ENCODE measurements at regions of chr6 and their contacts with region 1.

Region 1: DNA sequence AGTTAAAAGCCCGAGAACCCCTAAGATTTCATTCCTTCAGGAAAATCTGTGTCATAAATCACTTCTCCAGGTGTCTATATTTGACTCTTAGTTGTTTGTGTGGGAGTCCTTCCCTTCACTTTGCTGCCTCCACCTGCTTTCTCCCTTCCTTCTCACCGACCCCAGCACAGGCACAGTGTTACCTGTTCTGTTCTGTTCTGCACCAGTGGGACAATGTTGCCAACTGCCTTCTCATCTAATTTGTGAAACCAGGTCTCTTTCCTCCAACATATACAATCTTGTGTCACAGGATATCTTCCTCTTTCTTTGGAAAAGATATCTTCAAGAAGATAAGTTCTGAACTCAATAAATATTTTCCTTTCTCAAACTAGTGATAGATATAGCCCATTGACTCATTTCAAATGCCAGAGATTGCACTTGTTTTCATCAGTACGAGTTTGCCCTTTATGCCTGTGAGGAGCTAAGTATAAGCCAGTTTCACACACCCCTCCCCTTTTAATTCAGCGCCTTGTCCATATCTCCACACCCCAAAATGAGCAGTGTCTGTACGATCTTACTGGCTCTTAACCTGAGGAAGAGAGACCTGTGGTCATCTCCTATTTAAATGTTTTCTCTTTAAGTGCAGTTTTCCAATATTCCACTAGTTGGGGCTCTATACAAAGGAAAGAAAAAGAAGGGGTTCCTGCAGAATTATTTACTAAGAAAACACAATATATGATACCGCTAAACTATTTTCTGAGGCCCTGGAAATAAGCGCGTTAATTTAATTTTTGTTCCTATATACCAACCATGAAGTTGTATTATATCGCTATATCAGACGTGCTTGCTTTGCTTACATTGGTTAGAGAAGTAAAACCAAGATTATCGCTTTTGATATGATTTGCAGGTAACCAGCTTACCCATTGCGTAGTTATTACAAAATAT is 81.6 kb upstream of the PREP start:
- DNase-seq: no peak
- H3K4me3 Mint-ChIP-seq: peak overlapping the region; percentile 14
- H3K27ac Mint-ChIP-seq: peak overlapping the region; percentile 58
- H3K4me1 Mint-ChIP-seq: peaks cover 58% of the 10 kb centered on the region
- H3K27me3 Mint-ChIP-seq: no peaks in the 10 kb centered on the region

Region 2: GRCh38 chr6:105601541-105602236 is 117.2 kb after region 1 on chr6:
- intact Hi-C with region 1: loop called (anchors 2 kb)
- DNase-seq: peak; percentile 19
- H3K4me3 Mint-ChIP-seq: peak overlapping the region; percentile 34
- H3K27ac Mint-ChIP-seq: peak overlapping the region; percentile 69
- H3K4me1 Mint-ChIP-seq: peaks cover 28% of the 10 kb centered on the region
- H3K27me3 Mint-ChIP-seq: no peaks in the 10 kb centered on the region

Region 3: DNA sequence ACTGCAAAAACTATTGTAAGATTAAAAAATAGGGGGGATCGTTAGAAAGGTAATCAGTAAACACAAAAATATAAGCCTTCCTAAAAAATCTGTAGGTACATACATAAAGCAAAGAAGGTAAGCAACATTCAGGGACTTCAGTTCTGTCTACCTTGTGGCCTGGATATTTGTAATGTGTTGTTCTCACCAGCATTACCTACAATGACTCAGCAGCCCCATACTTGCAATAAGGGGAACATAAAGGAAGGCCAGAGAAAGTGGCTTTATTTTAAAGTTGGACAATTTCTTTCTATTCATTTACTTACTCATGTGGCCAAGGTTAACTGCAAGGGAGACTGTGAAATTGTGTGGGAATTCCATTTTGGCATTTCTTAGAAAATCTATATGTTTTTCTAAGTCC is 195.6 kb after region 1 on chr6:
- intact Hi-C with region 1: no loop called
- DNase-seq: no peak
- H3K4me3 Mint-ChIP-seq: no peak overlapping the region
- H3K27ac Mint-ChIP-seq: no peak overlapping the region
- H3K4me1 Mint-ChIP-seq: peaks cover 4% of the 10 kb centered on the region
- H3K27me3 Mint-ChIP-seq: peaks cover 4% of the 10 kb centered on the region

Region 4: GRCh38 chr6:105740946-105741645 is 256.6 kb after region 1 on chr6:
- intact Hi-C with region 1: loop called (anchors 5 kb)
- DNase-seq: no peak
- H3K4me3 Mint-ChIP-seq: no peak overlapping the region
- H3K27ac Mint-ChIP-seq: no peak overlapping the region
- H3K4me1 Mint-ChIP-seq: peaks cover 51% of the 10 kb centered on the region
- H3K27me3 Mint-ChIP-seq: no peaks in the 10 kb centered on the region

Region 5: GRCh38 chr6:105810105-105810921 is 325.8 kb after region 1 on chr6:
- intact Hi-C with region 1: loop called (anchors 5 kb)
- DNase-seq: peak; percentile 70
- H3K4me3 Mint-ChIP-seq: peak overlapping the region; percentile 39
- H3K27ac Mint-ChIP-seq: peak overlapping the region; percentile 78
- H3K4me1 Mint-ChIP-seq: peaks cover 64% of the 10 kb centered on the region
- H3K27me3 Mint-ChIP-seq: no peaks in the 10 kb centered on the region

Region 6: DNA sequence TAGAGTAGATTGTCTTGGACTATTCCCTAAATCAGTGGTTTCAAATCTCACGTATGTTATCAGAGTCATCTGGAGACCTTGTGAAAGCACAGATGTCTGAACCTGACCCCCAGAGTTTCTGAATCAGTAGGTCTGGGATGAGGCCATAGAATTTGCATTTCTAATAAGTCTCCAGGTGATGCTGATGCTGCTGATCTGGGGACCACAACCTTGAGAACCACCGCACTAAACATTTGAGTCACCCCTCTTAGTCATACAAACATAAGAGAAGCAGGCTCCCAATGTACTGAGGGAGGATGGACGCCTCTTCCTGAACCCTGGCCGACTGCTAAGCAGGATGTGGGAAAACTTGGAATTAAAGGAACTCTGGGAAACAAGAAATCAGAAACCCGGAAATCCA is 413.8 kb after region 1 on chr6:
- intact Hi-C with region 1: loop called (anchors 1 kb)
- DNase-seq: no peak
- H3K4me3 Mint-ChIP-seq: no peak overlapping the region
- H3K27ac Mint-ChIP-seq: no peak overlapping the region
- H3K4me1 Mint-ChIP-seq: peaks cover 30% of the 10 kb centered on the region
- H3K27me3 Mint-ChIP-seq: no peaks in the 10 kb centered on the region

Region 7: DNA sequence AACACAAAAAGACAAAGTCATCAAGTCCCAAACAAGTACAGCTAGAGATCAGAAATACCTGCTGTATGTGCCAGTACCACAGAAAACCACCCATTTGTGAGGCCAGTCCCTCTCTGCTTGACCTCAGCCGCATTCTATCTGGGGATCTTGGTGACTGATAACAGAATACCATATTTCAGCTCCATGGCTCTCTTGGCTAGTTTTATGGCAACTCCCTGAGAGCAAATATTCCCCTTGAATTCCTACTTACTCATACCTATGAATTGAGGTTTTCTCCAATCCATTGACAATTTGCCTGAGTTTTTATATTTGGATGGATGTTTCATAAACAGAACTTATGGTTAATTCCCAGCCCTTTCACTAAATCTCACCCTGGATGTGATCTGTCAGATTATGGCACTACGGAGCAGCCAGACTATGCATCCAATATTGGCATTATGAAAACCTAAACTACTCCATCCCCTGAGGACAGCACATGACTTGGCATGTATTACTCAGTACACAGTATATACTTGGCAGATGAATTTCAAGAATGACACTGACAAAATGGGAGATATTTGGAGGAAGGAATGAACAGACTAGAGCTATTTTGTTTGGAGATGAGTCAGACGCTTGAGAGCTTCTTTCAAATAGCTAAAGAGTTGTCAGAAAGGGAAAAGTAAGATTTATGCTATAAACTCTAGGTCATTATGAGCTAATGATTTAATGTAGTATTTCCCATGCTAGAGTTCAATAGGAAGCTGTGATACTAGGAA is 697.3 kb after region 1 on chr6:
- intact Hi-C with region 1: loop called (anchors 10 kb)
- DNase-seq: no peak
- H3K4me3 Mint-ChIP-seq: no peak overlapping the region
- H3K27ac Mint-ChIP-seq: peak overlapping the region; percentile 15
- H3K4me1 Mint-ChIP-seq: peaks cover 55% of the 10 kb centered on the region
- H3K27me3 Mint-ChIP-seq: no peaks in the 10 kb centered on the region

Region 8: DNA sequence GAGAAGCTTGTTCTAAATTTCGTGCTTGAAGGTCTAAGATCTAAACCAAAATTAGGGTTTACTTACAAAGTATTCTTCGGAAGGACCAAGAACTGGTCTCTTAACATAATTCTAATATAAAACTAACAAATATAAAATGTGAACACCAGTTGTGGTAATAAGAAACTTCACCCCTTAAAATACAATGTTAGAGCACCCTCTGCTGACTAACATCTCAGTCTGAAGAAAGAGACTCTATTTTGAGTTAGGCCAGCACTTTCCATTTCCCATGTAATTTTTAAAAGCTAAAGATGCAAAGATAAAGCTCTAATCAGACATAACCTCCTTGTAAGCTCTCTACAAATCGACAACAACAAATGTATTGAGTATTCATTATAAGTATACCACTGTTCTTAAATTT is 816.4 kb after region 1 on chr6:
- intact Hi-C with region 1: loop called (anchors 1 kb)
- DNase-seq: no peak
- H3K4me3 Mint-ChIP-seq: no peak overlapping the region
- H3K27ac Mint-ChIP-seq: no peak overlapping the region
- H3K4me1 Mint-ChIP-seq: peaks cover 13% of the 10 kb centered on the region
- H3K27me3 Mint-ChIP-seq: no peaks in the 10 kb centered on the region

Measured in activated T-helper 2 cell treated with anti-CD3 and anti-CD28 coated beads, Interferon-gamma antibody, Interleukin-2, Interleukin-4, amounts not matched to agents 10 μg/mL and 5 μg/mL and 100 μg/mL, durations not matched to agents 14 hours and 24 hours and 36 hours (primary cell).